OCI-LY7 (cell line): ENCODE measurements at regions of chrX and their contacts with region 1.

Region 1: DNA sequence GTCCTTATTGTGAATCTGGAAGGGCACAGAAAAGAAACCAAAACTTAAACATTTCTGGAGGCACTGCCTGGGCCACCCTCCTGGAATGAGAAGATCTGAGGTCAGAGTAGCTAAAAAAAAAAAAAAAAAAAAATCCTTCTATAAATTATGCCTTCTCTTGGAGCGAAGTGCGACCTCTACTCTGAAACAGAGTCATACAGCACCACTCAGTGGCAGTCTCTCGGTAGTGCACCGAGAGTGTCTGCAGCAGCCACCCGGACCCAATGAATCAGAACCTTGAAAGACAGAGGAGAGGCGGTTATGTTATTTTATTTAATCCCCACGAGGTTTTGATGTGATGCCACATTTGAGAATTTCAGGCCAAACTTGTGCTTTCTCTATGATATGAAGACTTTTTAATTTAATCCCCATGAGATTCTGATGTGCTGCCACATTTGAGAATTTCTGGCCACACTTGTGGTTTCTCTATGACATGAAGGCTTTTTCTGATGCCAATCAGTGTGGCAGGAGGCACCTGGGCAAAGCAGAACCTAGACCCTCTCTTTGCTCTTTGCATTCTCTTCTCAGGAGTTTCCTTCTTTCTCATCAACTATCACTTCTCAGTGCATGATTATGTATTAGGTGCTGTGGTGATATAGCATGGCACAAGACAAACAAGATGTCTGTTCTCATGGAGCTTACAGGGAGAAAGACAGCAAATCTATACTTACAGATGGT is 5.6 kb upstream of the CT47C1 start:
- DNase-seq: peak; percentile 43
- H3K4me3 ChIP-seq: no peak overlapping the region
- H3K27ac ChIP-seq: no peak overlapping the region
- H3K4me1 ChIP-seq: no peaks in the 10 kb centered on the region
- CTCF ChIP-seq: peak; percentile 68

Region 2: DNA sequence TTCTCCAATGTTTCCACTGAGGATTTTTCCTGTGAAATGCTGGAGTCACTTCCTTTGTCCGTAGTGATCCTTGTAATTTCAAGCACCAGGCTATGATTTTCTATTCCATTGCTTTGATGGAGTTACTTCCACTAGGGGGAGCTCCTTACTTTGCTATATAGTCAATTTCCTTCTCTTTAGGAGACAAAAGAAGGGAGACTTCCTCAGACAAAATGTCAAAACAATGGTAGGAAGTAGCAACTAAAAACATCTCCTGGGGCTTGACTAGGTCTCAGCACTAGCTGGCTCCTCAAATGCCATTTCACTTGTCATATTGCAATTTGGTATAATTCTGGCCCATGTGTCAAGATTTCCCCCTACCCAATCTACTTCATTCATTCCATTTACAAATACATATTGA is 219.5 kb before region 1 on chrX:
- CTCF ChIA-PET with region 1: no interaction called
- POLR2A ChIA-PET with region 1: no interaction called
- intact Hi-C with region 1: loop called (anchors 5 kb)
- DNase-seq: peak; percentile 41
- H3K4me3 ChIP-seq: no peak overlapping the region
- H3K27ac ChIP-seq: no peak overlapping the region
- H3K4me1 ChIP-seq: no peaks in the 10 kb centered on the region
- CTCF ChIP-seq: peak; percentile 78

Region 3: DNA sequence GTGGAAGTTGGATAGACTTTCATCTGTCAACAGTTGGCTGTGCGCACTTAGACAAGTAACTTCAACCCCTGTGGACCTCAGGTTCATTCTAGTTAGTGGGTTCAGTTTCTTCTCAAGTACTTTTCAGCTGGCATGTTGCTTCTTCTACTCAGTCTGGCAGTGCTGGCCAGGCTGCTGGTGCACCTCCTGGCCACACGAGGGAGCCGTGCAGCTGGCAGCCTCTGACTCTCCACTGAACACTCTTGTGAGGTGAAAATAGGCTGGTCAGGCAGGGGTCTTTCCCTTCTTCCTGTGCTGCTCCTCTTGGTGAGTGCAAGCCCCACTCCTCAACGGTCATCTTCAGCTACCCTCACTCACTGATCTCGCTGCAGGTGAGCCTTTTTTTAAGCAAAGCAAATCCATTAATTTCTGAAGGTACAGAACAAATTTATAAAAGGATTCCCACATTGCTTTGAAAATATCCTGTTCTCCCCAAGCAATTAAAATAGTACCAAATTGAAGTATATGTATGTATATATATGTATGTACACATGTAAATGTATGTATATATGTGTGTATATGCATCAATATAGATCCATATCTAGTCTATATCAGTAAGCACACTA is 62.2 kb before region 1 on chrX:
- CTCF ChIA-PET with region 1: no interaction called
- POLR2A ChIA-PET with region 1: no interaction called
- intact Hi-C with region 1: loop called (anchors 5 kb)
- DNase-seq: peak; percentile 42
- H3K4me3 ChIP-seq: no peak overlapping the region
- H3K27ac ChIP-seq: no peak overlapping the region
- H3K4me1 ChIP-seq: no peaks in the 10 kb centered on the region
- CTCF ChIP-seq: peak; percentile 78

Region 4: GRCh38 chrX:119015407-119016237 is 51.6 kb before region 1 on chrX:
- CTCF ChIA-PET with region 1: no interaction called
- POLR2A ChIA-PET with region 1: no interaction called
- intact Hi-C with region 1: no loop called
- DNase-seq: peak; percentile 59
- H3K4me3 ChIP-seq: no peak overlapping the region
- H3K27ac ChIP-seq: peak overlapping the region; percentile 15
- H3K4me1 ChIP-seq: peaks cover 13% of the 10 kb centered on the region
- CTCF ChIP-seq: no peak

Region 5: GRCh38 chrX:119583431-119584059 is 516.4 kb after region 1 on chrX:
- CTCF ChIA-PET with region 1: no interaction called
- POLR2A ChIA-PET with region 1: no interaction called
- intact Hi-C with region 1: no loop called
- DNase-seq: no peak
- H3K4me3 ChIP-seq: no peak overlapping the region
- H3K27ac ChIP-seq: no peak overlapping the region
- H3K4me1 ChIP-seq: peaks cover 8% of the 10 kb centered on the region
- CTCF ChIP-seq: no peak